ENCODE measurements at regions of chr6 and their contacts with region 1.

Region 1: DNA sequence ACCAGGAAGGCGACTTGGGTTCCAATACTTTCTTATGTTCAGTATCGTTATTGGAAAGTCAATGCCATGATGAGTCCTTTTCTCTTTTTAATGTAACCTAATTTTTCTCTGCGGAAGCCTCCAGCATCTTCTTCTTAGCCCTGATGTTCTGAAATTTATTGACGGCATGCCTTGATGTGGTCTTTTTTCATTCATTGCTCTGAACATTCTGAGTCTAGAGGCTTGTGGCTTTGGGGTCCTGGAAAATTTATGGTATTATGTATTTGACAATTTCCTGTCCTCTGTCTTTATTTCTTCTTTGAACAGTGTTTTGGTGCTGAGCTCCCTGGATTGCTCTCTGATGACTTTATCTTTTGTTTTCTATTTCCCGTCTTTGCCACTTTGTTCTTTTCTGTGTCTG is 28.7 kb upstream of the MAS1 start:
- DNase-seq: no peak
- H3K4me3 ChIP-seq: no peak overlapping the region
- H3K27ac ChIP-seq: no peak overlapping the region
- H3K4me1 ChIP-seq: no peaks in the 10 kb centered on the region
- H3K27me3 ChIP-seq: no peaks in the 10 kb centered on the region
- CTCF ChIP-seq: no peak
- POLR2A ChIP-seq: no peak

Region 2: GRCh38 chr6:159654483-159655098 is 207.5 kb before region 1 on chr6:
- intact Hi-C with region 1: no loop called
- DNase-seq: no peak
- H3K4me3 ChIP-seq: no peak overlapping the region
- H3K27ac ChIP-seq: no peak overlapping the region
- H3K4me1 ChIP-seq: no peaks in the 10 kb centered on the region
- H3K27me3 ChIP-seq: no peaks in the 10 kb centered on the region
- CTCF ChIP-seq: peak in 5 of 6 experiments; percentile 26 to 72 (median 55)
- POLR2A ChIP-seq: no peak

Region 3: DNA sequence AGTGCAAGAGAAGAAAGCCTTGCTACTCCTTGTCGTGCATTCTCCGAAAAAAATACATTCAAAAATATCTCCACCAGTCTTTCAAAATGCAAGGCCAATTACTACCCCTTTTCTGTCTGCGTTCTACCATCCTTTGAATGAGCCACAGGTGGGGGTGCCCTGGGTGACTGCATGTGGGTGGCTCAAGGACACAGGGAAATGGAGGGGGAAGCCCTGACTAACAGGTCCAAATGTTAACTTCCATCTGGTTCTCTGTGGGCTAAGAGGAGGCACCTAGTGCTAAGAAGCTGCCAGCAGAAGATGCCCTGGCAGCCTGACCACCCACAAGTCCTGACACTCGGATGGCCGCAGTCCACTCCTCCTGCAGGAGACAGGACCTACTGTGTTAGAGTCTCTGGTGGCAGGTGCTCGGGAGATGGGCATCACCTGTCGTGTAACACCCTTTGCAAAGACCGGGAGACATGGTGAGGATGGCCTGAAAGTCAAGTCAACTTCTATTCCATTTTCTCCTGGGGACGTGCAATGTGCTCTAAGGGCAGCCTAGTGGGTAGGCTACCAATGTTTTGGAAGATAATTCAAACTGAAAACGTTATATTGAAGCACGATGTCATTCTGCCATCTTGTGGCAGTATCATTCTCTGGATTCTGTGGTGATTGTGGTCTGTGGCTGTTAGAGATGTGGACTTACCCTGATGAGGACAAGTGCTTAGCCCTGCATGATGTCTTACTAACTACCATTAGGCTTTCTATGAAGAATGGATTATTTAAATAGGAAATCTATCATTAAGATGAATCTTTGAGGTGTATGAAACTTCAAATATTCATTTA is 79.4 kb after region 1 on chr6:
- intact Hi-C with region 1: loop called (anchors 5 kb)
- DNase-seq: no peak
- H3K4me3 ChIP-seq: no peak overlapping the region
- H3K27ac ChIP-seq: no peak overlapping the region
- H3K4me1 ChIP-seq: peaks cover 0 to 12% of the 10 kb centered on the region in 2 donors
- H3K27me3 ChIP-seq: no peaks in the 10 kb centered on the region
- CTCF ChIP-seq: peak in 4 of 6 experiments; percentile 50 to 73 (median 62)
- POLR2A ChIP-seq: no peak

Region 4: DNA sequence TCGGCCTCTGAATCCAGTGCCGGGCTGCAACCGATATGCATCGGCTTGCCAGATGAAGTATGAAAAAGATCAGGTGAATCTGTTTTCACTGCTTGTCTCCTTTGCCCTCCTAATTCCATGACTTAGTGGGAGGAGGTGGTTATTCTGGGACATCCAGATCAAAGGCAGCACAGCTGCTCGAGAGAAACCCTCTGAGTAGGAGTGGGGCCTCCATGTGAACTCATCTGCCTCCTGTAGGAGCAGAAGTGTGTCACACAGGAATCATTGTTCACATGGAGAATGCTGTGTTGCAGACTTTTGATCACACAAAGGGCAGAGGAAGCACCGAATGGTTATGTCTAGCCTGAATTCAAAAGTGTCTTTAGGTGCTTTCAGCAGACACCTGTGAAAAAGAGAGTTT is 186.4 kb after region 1 on chr6:
- intact Hi-C with region 1: loop called (anchors 5 kb)
- DNase-seq: no peak
- H3K4me3 ChIP-seq: no peak overlapping the region
- H3K27ac ChIP-seq: no peak overlapping the region
- H3K4me1 ChIP-seq: no peaks in the 10 kb centered on the region
- H3K27me3 ChIP-seq: no peaks in the 10 kb centered on the region
- CTCF ChIP-seq: no peak
- POLR2A ChIP-seq: no peak

Region 5: DNA sequence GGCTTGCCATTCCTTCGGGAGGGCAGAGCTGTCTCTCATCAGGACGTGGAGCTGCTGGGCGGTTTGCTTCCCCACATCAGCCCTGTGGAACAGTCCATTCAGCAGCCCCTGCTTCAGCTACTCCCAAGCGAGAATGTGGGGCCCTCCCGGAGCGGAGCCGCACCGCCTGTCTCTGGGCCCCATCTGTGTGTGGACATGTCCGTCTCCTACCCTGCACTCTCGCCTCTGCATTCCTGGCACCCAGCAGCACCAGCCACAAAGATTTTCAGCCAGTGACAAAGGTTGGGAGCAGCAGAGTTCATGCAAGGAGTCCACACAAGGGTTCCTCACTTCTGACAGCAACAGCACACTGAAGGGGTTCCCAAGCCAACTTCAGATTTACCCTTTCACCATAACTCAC is 230.5 kb after region 1 on chr6:
- intact Hi-C with region 1: loop called (anchors 10 kb)
- DNase-seq: peak in 1 of 2 donors; percentile 6
- H3K4me3 ChIP-seq: no peak overlapping the region
- H3K27ac ChIP-seq: peak overlapping the region in 2 of 3 donors; percentile 2 to 48
- H3K4me1 ChIP-seq: peaks cover 6% of the 10 kb centered on the region in 2 donors
- H3K27me3 ChIP-seq: no peaks in the 10 kb centered on the region
- CTCF ChIP-seq: no peak
- POLR2A ChIP-seq: no peak

Region 6: DNA sequence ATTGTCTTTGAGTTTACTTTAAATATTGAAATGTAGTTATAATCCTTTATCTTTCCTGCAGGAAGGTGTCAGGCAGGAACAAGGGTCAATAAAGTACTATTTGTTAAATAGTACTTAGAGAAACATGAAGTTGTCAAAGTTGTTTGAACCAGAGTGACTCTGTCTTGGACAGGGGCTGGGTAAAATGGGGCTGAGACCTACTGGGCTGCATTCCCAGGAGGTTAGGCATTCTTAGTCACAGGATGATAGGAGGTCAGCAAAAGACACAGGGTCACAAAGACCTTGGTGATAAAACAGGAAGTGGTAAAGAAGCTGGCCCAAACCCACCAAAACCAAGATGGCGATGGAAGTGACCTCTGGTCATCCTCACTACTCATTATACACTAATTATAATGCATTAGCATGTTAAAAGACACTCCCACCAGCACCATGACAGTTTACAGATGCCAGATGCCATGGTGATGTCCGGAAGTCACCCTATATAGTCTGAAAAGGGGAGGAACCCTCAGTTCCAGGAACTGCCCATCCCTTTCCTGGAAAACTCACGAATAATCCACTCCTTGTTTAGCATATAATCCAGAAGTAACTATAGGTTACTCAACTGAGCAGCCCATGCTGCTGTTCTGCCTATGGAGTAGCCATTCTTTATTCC is 376.8 kb after region 1 on chr6:
- intact Hi-C with region 1: no loop called
- DNase-seq: no peak
- H3K4me3 ChIP-seq: no peak overlapping the region
- H3K27ac ChIP-seq: no peak overlapping the region
- H3K4me1 ChIP-seq: no peaks in the 10 kb centered on the region
- H3K27me3 ChIP-seq: no peaks in the 10 kb centered on the region
- CTCF ChIP-seq: no peak
- POLR2A ChIP-seq: no peak

Measured in thyroid gland (tissue), 4 donors.